Uterus (tissue), 4 donors: ENCODE measurements at regions of chr10 and their contacts with region 1.

Region 1: GRCh38 chr10:110225756-110226542 is 18.5 kb downstream of the MXI1 start:
- DNase-seq: peak; percentile 90 to 91
- H3K4me3 ChIP-seq: peak overlapping the region; percentile 81 to 95
- H3K27ac ChIP-seq: peak overlapping the region; percentile 95 to 99
- H3K4me1 ChIP-seq: peaks cover 0 to 5% of the 10 kb centered on the region in 2 donors
- H3K27me3 ChIP-seq: no peaks in the 10 kb centered on the region
- CTCF ChIP-seq: peak; percentile 27 to 92 (median 74)
- POLR2A ChIP-seq: peak; percentile 40 to 62

Region 2: DNA sequence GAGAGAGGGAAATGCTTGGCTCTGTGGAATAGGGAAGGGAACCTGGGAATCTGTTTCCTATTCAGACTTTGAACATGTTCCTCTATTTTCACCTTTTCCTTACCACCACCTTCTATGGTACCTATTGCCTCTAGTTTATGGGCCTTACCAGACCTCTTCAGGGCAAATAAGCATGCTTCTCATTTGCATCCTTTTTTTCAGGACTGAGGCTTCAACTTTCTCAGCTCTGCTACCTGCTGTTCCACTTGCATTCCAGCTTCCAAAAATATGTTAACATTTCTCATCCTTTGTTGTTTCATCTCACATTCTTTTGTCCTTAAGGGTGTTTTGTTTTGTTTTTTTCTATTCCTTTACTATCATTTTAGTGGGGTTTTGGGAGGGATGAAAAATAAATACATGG is 96.5 kb before region 1 on chr10:
- intact Hi-C with region 1: no loop called
- DNase-seq: no peak
- H3K4me3 ChIP-seq: no peak overlapping the region
- H3K27ac ChIP-seq: no peak overlapping the region
- H3K4me1 ChIP-seq: no peaks in the 10 kb centered on the region
- H3K27me3 ChIP-seq: no peaks in the 10 kb centered on the region
- CTCF ChIP-seq: no peak
- POLR2A ChIP-seq: no peak

Region 3: GRCh38 chr10:110210674-110211464 is 15.1 kb before region 1 on chr10:
- intact Hi-C with region 1: loop called (anchors 2 kb)
- DNase-seq: peak; percentile 97 to 98
- H3K4me3 ChIP-seq: peak overlapping the region; percentile 61 to 78
- H3K27ac ChIP-seq: peak overlapping the region; percentile 95 to 98
- H3K4me1 ChIP-seq: no peaks in the 10 kb centered on the region
- H3K27me3 ChIP-seq: no peaks in the 10 kb centered on the region
- CTCF ChIP-seq: no peak
- POLR2A ChIP-seq: peak; percentile 60 to 87

Region 4: DNA sequence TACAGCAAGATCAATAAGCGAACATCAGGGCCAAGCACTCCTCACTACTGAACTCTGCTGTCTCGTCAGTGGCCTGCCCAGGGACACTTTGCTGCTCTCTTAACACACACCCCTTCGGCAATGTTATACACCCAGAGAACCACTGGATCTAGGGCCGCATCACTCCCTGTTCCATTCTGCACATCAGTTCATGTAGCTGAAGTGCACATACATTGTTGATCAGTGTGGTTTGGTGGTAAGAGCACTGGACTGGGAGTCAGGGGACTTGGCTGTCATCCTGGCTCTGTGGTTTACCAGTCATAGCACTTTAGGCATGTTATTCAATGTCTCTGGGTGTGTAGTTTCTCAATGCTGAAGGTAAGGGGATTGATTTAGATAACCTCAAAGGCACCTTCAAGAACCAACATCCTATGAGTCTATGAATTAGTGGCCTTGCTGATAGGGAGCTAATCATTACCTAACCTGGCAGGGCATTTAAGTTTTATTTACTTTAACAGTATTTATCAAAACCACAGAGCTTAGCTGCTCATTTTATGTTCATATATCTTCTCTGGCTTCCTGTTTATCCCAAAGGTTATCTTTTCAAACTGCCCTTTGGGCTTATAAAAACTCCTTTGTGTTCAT is 296.5 kb after region 1 on chr10:
- intact Hi-C with region 1: no loop called
- DNase-seq: no peak
- H3K4me3 ChIP-seq: no peak overlapping the region
- H3K27ac ChIP-seq: no peak overlapping the region
- H3K4me1 ChIP-seq: no peaks in the 10 kb centered on the region
- H3K27me3 ChIP-seq: no peaks in the 10 kb centered on the region
- CTCF ChIP-seq: no peak
- POLR2A ChIP-seq: no peak

Region 5: DNA sequence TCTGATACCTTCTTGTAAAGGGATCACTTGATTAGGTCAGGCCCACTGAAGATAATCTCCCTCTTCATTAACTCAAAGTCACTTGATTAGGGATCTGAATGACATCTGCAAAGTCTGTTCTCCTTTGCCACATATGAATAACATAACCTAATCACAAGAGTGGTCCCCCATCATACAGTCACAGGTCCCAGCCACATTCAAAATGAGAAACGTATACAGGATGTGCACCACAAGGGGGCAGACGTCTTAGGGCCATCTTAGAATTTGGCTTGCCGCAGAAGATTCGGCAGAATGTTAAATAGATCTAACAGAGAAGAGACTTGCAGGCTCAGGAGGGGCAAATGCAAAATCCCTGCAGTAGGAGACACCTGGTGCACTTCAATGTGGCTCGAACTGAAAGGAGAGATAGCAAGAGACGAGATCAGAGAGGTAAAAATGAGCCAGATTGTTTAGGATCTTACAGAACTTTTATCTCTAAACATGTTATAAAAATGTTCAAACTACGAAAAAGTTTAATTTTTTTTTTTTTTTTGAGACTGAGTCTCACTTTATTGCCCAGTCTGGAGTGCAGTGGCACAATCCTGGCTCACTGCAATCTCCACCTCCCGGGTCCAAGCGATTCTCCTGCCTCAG is 331.1 kb after region 1 on chr10:
- intact Hi-C with region 1: no loop called
- DNase-seq: peak in 1 of 2 donors; percentile 31
- H3K4me3 ChIP-seq: no peak overlapping the region
- H3K27ac ChIP-seq: no peak overlapping the region
- H3K4me1 ChIP-seq: no peaks in the 10 kb centered on the region
- H3K27me3 ChIP-seq: peaks cover 0 to 5% of the 10 kb centered on the region in 2 donors
- CTCF ChIP-seq: peak in 3 of 4 experiments; percentile 47 to 48 (median 47)
- POLR2A ChIP-seq: no peak